Heart left ventricle (tissue), 16 donors: ENCODE measurements at regions of chr1 and their contacts with region 1.

Region 1: DNA sequence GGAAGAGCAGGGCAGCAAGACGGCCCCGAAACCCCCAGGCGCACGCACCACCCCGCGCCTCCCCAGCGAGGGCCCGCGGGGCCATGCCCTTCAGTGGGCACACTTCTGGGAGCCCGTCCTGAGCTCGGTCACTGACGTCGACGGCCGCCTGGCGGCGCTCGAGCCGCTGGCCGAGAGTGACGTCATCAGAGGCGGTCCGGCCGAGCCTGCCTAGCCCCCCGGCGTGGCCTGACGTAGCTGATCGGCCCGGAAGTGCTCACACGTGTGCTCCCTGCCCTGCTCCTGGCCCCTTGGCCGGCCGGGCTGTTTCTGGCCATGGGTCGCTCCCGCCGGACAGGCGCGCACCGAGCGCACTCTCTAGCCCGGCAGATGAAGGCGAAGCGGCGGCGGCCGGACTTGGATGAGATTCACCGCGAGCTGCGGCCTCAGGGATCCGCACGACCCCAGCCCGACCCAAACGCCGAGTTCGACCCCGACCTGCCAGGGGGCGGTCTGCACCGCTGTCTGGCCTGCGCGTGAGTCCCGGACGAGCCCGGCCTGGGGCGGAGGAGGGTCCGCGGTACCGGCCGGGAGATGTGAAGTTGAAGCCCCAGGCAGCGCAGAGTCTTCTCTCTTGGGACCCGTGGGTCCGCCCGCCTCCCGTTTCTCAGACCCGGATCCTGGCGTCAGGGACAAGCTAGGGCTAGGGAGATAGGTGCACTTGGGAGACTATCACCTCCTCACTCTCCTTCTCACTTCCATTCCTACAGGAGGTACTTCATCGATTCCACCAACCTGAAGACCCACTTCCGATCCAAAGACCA is at the start of gene ZNF593:
- DNase-seq: peak; percentile 93 to 97 (median 95)
- ATAC-seq: peak; percentile 92 to 98 (median 96)
- H3K4me3 ChIP-seq: peak within 1 kb of the TSS; percentile 66 to 94 (median 86)
- H3K27ac ChIP-seq: peak within 1 kb of the TSS; percentile 34 to 89 (median 81)
- H3K4me1 ChIP-seq: peaks cover 5 to 26% (median 16%) of the 10 kb centered on the region in 12 donors
- H3K27me3 ChIP-seq: no peaks in the 10 kb centered on the region
- CTCF ChIP-seq: peak; percentile 81 to 98 (median 91)
- POLR2A ChIP-seq: peak in 1 of 2 donors; percentile 59
- total RNA-seq, gene ZNF593: 13.7 to 36.8 (median 21.0) TPM

Region 2: GRCh38 chr1:25895365-25895993 is 274.4 kb before region 1 on chr1:
- intact Hi-C with region 1: loop called in 2 of 10 experiments (anchors 5 to 10 kb)
- DNase-seq: peak; percentile 91 to 94 (median 92)
- ATAC-seq: peak; percentile 93 to 98 (median 94)
- H3K4me3 ChIP-seq: peak overlapping the region in 5 of 12 donors; percentile 7 to 26 (median 14)
- H3K27ac ChIP-seq: no peak overlapping the region
- H3K4me1 ChIP-seq: peaks cover 0 to 15% (median 7%) of the 10 kb centered on the region in 12 donors
- H3K27me3 ChIP-seq: no peaks in the 10 kb centered on the region
- CTCF ChIP-seq: peak; percentile 97 to 100 (median 99)
- POLR2A ChIP-seq: peak in 1 of 2 donors; percentile 16

Region 3: DNA sequence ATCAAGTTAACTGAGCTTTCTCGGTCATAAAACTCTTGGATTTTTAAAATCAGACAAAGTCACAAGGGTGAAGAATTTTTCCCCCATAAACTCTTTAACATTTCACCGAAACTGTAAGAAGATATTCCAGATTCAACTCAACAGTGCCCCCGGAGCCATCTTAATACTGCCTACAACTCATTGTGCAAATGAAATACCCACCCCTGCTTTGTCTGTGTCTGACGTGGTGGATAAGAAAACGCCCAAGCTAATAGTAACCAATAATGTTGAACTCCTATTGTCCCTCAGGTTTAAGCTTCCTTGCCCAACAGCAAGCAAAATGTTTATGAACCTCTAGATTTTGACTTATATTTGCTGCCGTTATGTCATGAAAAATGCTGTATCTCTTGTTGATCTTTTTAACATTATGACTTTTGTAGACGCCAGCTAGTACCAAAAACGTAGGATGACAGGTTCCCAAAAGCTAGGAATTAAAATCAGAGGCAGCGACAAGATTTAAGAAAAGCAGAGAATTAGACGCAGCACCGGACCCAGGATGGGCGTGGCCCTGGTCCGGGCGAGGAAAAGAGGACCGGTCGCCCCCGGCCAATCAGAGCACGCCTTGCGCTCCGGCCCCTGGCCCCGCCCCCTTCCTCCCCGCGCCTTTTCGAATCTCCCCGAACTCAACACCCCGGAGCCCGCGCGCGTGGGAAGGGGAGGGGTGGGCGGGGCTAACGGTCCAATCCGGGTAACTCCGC is 264.8 kb before region 1 on chr1:
- intact Hi-C with region 1: loop called in 1 of 10 experiments (anchors 10 kb)
- DNase-seq: peak; percentile 94 to 96 (median 95)
- ATAC-seq: peak; percentile 90 to 96 (median 95)
- H3K4me3 ChIP-seq: peak overlapping the region; percentile 59 to 85 (median 67)
- H3K27ac ChIP-seq: peak overlapping the region in 10 of 12 donors; percentile 40 to 82 (median 64)
- H3K4me1 ChIP-seq: peaks cover 4 to 30% (median 20%) of the 10 kb centered on the region in 12 donors
- H3K27me3 ChIP-seq: no peaks in the 10 kb centered on the region
- CTCF ChIP-seq: peak in 1 of 12 donors; percentile 14
- POLR2A ChIP-seq: no peak

Region 4: GRCh38 chr1:26225033-26225831 is 55.4 kb after region 1 on chr1:
- intact Hi-C with region 1: loop called in 4 of 10 experiments (anchors 5 kb)
- DNase-seq: peak; percentile 66 to 85 (median 82)
- ATAC-seq: peak; percentile 72 to 94 (median 92)
- H3K4me3 ChIP-seq: peak overlapping the region; percentile 10 to 72 (median 55)
- H3K27ac ChIP-seq: peak overlapping the region in 9 of 12 donors; percentile 22 to 69 (median 54)
- H3K4me1 ChIP-seq: peaks cover 0 to 15% (median 5%) of the 10 kb centered on the region in 12 donors
- H3K27me3 ChIP-seq: peaks cover 0 to 17% (median 0%) of the 10 kb centered on the region in 9 donors
- CTCF ChIP-seq: no peak
- POLR2A ChIP-seq: no peak

Region 5: GRCh38 chr1:26233903-26234643 is 64.2 kb after region 1 on chr1 and contains the start of gene CEP85:
- intact Hi-C with region 1: loop called in 9 of 10 experiments (anchors 2 to 5 kb)
- DNase-seq: peak; percentile 97 to 99 (median 98)
- ATAC-seq: peak; percentile 99 to 100 (median 99)
- H3K4me3 ChIP-seq: peak within 1 kb of the TSS; percentile 48 to 90 (median 78)
- H3K27ac ChIP-seq: peak within 1 kb of the TSS; percentile 5 to 96 (median 93)
- H3K4me1 ChIP-seq: peaks cover 0 to 36% (median 11%) of the 10 kb centered on the region in 12 donors
- H3K27me3 ChIP-seq: no peaks in the 10 kb centered on the region
- CTCF ChIP-seq: peak; percentile 72 to 95 (median 86)
- POLR2A ChIP-seq: peak; percentile 61 to 93
- total RNA-seq, gene CEP85: 28.6 to 180 (median 48.7) TPM

Region 6: GRCh38 chr1:26279456-26280332 is 109.8 kb after region 1 on chr1 and contains the start of gene SH3BGRL3:
- intact Hi-C with region 1: loop called in 2 of 10 experiments (anchors 5 kb)
- DNase-seq: peak; percentile 92 to 94 (median 92)
- ATAC-seq: peak; percentile 51 to 85 (median 80)
- H3K4me3 ChIP-seq: peak within 1 kb of the TSS; percentile 56 to 99 (median 74)
- H3K27ac ChIP-seq: peak within 1 kb of the TSS; percentile 60 to 98 (median 92)
- H3K4me1 ChIP-seq: peaks cover 8 to 93% (median 70%) of the 10 kb centered on the region in 12 donors
- H3K27me3 ChIP-seq: no peaks in the 10 kb centered on the region
- CTCF ChIP-seq: peak in 10 of 12 donors; percentile 19 to 67 (median 33)
- POLR2A ChIP-seq: peak; percentile 32 to 94
- total RNA-seq, gene SH3BGRL3: 22.4 to 234 (median 40.0) TPM

Region 7: DNA sequence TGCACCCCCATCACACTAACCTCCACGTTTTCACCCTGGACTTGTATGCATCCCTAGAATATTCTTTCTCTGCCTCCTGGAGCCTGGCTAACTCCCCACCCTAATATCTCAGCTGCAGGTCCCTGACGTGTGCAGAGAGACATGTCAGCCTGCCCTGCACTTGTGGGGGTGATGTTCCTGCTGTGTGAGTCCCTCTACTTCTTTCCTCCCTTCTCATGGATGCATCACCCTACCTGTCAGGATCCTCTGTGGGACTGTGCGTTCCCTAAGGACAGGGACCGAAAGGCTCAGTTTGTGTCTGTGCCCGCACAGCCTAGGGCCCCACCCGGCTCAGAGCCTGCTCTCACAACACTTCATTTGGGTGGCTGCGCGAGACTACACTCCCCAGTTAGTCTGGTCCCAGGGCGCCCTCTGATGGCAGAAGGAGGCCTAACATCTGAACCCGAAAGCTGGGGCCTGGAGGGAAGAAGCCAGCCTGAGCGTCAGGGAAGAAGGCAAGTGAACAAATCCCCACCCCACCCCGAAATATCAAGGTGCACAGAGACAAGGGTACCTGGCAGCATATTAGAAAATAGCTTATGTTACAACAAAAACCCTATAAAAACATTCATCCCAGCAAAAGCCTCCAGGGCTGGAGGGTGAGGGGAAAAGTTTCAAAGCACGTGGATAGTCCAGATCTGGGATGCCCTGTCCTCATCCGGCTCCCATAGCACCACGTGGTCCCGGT is 151.6 kb after region 1 on chr1:
- intact Hi-C with region 1: loop called in 6 of 10 experiments (anchors 2 to 10 kb)
- DNase-seq: peak; percentile 89 to 95 (median 92)
- ATAC-seq: peak; percentile 82 to 94 (median 92)
- H3K4me3 ChIP-seq: peak overlapping the region in 2 of 12 donors; percentile 30 to 34
- H3K27ac ChIP-seq: peak overlapping the region in 1 of 12 donors; percentile 60
- H3K4me1 ChIP-seq: peaks cover 0 to 47% (median 7%) of the 10 kb centered on the region in 12 donors
- H3K27me3 ChIP-seq: no peaks in the 10 kb centered on the region
- CTCF ChIP-seq: peak; percentile 81 to 92 (median 90)
- POLR2A ChIP-seq: no peak

Region 8: GRCh38 chr1:26351591-26352337 is 181.9 kb after region 1 on chr1:
- intact Hi-C with region 1: no loop called
- DNase-seq: no peak
- ATAC-seq: no peak
- H3K4me3 ChIP-seq: no peak overlapping the region
- H3K27ac ChIP-seq: no peak overlapping the region
- H3K4me1 ChIP-seq: peaks cover 0 to 6% (median 0%) of the 10 kb centered on the region in 12 donors
- H3K27me3 ChIP-seq: peaks cover 0 to 27% (median 0%) of the 10 kb centered on the region in 9 donors
- CTCF ChIP-seq: no peak
- POLR2A ChIP-seq: no peak